Lower leg skin (tissue), 4 donors: ENCODE measurements at regions of chr4 and their contacts with region 1.

Region 1: DNA sequence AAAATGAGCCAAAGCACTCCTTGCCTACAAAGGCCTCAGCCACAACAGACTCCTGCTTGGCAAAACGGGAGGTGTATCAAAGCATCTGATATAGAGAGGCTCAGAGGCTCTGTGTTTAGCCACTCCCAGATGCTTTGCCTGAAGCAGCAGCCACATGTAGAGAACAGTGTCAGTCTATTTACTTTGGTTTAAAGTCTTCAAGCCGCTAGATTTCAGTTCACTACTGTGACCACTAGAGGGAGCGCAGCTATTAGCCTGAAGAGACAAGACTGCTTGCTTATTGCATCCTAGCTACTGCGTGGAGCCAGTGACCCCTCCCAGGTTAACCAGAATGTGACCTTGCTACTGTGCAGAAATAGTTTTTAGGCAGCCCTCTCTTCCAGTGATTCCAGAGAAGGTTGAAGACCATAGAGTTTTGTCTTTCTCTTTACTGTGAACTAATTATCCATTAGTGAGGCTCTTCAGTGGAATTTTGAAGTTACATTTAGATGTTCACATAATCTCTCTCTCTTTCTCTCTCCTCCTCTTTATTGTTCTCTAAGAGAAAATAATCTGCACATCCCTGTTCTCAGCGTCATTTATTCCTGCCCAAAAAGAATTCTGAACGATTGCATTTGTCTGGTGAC is 39.3 kb downstream of the BMP3 start:
- DNase-seq: peak; percentile 78 to 88
- H3K4me3 ChIP-seq: no peak overlapping the region
- CTCF ChIP-seq: peak in 1 of 3 donors; percentile 35
- POLR2A ChIP-seq: no peak

Region 2: DNA sequence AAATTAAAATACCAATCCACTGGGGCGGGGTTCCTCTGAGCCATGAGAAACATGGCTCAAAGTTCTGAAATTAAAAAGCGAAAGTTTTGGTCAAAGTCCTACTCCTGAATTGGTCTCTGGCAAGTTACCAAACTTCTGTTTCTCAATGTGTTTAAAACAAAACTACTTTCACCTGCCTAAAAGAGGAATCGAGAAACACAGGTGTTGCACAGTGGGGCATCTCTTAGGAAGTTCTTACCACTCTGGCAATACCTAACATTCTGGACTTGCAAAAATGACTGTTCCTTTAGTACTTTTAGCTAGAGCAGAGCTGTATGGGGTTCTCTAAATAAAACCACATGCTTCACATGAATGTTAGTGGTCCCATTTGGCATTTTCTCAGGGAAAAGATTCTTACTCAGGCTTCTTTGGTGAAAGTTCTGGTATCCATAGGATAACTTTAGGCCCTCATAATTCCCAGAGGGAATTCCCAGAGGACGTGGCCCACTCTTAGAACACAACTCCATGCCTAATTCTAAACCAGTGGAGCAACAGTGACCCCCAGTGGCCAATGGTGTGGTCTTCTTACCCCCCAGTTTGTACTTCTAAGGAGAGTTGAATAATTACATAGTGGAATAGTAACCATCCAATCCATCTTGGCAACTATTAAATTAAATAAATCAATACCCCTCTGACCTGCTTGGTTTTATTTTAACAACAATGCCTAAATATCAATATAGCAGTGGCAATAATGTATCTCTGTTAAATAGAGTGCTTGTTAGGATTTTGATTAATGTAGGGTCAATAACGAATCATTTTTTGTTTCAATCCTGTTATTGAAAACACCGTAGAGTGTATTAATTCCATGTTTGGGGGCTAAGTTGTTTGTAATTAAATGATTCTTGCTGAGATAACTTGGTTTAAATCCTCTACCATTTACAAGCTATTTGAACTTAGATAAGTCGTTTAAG is 17.4 kb before region 1 on chr4:
- intact Hi-C with region 1: no loop called
- DNase-seq: no peak
- H3K4me3 ChIP-seq: no peak overlapping the region
- CTCF ChIP-seq: no peak
- POLR2A ChIP-seq: no peak

Region 3: DNA sequence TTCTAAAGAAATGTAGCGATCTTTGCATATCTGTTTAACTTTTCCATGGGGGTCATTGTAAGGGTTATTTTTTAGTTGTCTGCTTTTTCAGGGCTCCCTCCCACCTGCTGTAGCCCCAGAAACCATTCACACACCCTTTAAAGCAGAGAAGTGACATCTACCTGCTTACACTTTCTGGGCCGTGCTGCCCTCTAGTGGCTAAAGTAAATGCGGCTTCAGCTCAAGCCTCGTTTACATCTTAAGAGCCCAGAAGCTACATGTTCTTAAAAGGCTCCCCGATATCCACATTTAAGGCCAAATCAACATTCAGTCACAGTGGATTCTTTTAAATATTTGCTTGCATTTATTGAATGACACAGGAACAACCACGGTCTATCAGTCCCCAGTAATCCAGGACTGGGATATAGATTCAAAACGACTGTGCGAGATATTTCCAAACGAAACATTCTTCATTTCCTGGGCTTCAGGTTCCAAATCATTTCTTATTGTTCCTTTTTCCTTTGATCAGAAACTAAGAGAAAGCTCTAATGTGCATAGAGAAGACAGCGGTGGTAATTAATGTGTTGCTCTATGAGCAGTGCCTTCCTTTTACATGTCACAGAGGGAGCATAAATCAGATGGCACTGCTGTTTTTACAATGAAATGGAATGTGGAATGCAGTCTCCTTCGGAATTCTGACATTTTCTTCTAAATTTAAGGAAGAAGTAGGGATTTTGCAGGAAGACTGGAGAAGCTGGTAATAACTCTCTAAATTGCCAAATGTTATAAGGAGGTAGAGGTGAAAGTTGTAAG is 282.0 kb after region 1 on chr4:
- intact Hi-C with region 1: loop called (anchors 5 kb)
- DNase-seq: peak; percentile 75 to 93
- H3K4me3 ChIP-seq: no peak overlapping the region
- CTCF ChIP-seq: peak in 1 of 3 donors; percentile 43
- POLR2A ChIP-seq: no peak